Activated B cell treated with CpG ODN at 0.5 μM for 24 hours (primary cell): ENCODE measurements at regions of chr1 and their contacts with region 1.

Region 1: DNA sequence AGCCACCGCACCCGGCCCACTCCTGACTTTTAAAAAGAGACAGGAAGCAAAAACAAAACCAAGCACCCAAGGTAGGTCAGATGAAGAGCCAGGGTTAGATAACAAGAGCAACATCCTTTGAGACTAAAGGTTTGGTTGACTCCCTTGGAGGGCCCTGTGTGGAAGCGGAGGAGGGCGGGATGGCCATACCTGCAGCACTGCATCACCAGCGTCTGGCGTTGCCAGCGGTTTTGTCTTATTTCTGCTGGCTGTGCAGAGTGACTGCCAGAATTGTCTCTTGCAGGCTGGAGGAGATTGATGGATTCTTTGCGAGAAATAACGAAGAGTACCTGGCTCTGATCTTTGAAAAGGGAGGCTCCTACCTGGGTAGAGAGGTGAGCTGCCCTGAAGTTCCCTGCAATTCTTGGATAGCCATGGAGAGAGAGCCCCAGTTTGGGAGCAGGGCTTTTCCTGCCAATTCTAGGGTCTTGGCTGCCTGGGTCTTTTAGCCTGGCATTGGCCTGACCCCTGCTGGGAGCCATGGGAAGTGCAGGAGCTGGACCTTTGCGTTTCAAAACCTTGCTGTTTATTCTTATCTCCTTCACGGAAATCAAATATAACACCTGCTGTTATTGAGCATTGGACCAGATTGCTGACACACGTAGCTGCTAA is 24.0 kb downstream of the QSOX1 start:
- DNase-seq: peak; percentile 54
- ATAC-seq: peak; percentile 71
- H3K4me3 Mint-ChIP-seq: no peak overlapping the region
- H3K27ac Mint-ChIP-seq: no peak overlapping the region
- H3K4me1 Mint-ChIP-seq: no peaks in the 10 kb centered on the region
- H3K27me3 Mint-ChIP-seq: no peaks in the 10 kb centered on the region
- CTCF ChIP-seq: peak; percentile 84

Region 2: DNA sequence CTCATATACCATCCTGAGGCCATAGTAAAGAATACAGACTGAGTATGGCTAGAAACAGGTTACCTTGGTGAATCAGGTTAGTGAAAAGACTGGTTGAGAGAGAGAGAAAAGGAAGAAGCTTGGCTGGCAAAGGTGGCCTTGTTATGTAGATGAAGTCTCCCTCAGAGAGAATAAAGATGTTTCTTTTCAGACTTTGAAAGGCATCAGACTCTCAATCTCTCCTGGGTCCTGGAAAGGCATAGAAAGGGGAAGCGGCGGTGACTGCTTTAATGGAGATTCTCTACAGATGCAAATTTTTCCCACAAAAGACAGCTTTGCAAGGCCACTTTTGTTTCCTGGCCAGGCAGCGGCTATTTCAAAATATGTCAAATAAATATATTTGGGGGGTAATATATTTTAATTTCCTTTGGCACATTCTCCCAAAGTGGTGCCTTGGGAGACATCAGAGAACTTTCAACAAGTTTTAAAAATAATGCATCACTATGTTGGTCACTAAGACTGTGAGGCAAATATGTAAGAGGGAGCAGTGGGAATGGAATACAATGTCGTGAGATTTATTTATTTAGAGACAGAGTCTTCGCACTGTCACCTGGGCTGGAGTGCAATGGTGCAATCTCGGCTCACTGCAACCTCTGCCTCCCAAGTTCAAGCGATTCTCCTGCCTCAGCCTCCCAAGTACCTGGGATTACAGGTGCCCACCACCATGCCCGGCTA is 649.0 kb before region 1 on chr1:
- CTCF ChIA-PET with region 1: no interaction called
- POLR2A ChIA-PET with region 1: no interaction called
- intact Hi-C with region 1: no loop called
- DNase-seq: no peak
- ATAC-seq: no peak
- H3K4me3 Mint-ChIP-seq: no peak overlapping the region
- H3K27ac Mint-ChIP-seq: no peak overlapping the region
- H3K4me1 Mint-ChIP-seq: no peaks in the 10 kb centered on the region
- H3K27me3 Mint-ChIP-seq: peaks cover 10% of the 10 kb centered on the region
- CTCF ChIP-seq: no peak

Region 3: GRCh38 chr1:179706339-179706941 is 472.2 kb before region 1 on chr1:
- CTCF ChIA-PET with region 1: interaction called, 23 read pairs
- POLR2A ChIA-PET with region 1: no interaction called
- intact Hi-C with region 1: loop called (anchors 1 kb)
- DNase-seq: no peak
- ATAC-seq: no peak
- H3K4me3 Mint-ChIP-seq: no peak overlapping the region
- H3K27ac Mint-ChIP-seq: no peak overlapping the region
- H3K4me1 Mint-ChIP-seq: peaks cover 4% of the 10 kb centered on the region
- H3K27me3 Mint-ChIP-seq: peaks cover 7% of the 10 kb centered on the region
- CTCF ChIP-seq: no peak

Region 4: GRCh38 chr1:179809506-179810366 is 368.9 kb before region 1 on chr1:
- CTCF ChIA-PET with region 1: interaction called, 11 read pairs
- POLR2A ChIA-PET with region 1: no interaction called
- intact Hi-C with region 1: loop called (anchors 1 kb)
- DNase-seq: peak; percentile 47
- ATAC-seq: peak; percentile 78
- H3K4me3 Mint-ChIP-seq: no peak overlapping the region
- H3K27ac Mint-ChIP-seq: no peak overlapping the region
- H3K4me1 Mint-ChIP-seq: peaks cover 11% of the 10 kb centered on the region
- H3K27me3 Mint-ChIP-seq: peaks cover 23% of the 10 kb centered on the region
- CTCF ChIP-seq: no peak

Region 5: GRCh38 chr1:179867807-179868330 is 310.8 kb before region 1 on chr1:
- CTCF ChIA-PET with region 1: interaction called, 101 read pairs
- POLR2A ChIA-PET with region 1: no interaction called
- intact Hi-C with region 1: loop called (anchors 1 kb)
- DNase-seq: peak; percentile 34
- ATAC-seq: peak; percentile 71
- H3K4me3 Mint-ChIP-seq: no peak overlapping the region
- H3K27ac Mint-ChIP-seq: no peak overlapping the region
- H3K4me1 Mint-ChIP-seq: peaks cover 18% of the 10 kb centered on the region
- H3K27me3 Mint-ChIP-seq: no peaks in the 10 kb centered on the region
- CTCF ChIP-seq: peak; percentile 50

Region 6: GRCh38 chr1:180103819-180104218 is 74.8 kb before region 1 on chr1:
- CTCF ChIA-PET with region 1: interaction called, 6 read pairs
- POLR2A ChIA-PET with region 1: no interaction called
- intact Hi-C with region 1: loop called (anchors 2 kb)
- DNase-seq: no peak
- ATAC-seq: no peak
- H3K4me3 Mint-ChIP-seq: no peak overlapping the region
- H3K27ac Mint-ChIP-seq: no peak overlapping the region
- H3K4me1 Mint-ChIP-seq: no peaks in the 10 kb centered on the region
- H3K27me3 Mint-ChIP-seq: no peaks in the 10 kb centered on the region
- CTCF ChIP-seq: no peak

Region 7: GRCh38 chr1:180154325-180155181 is 24.1 kb before region 1 on chr1 and contains the start of gene QSOX1:
- CTCF ChIA-PET with region 1: no interaction called
- POLR2A ChIA-PET with region 1: interaction called, 4 read pairs
- intact Hi-C with region 1: loop called (anchors 1 kb)
- DNase-seq: peak; percentile 79
- ATAC-seq: peak; percentile 97
- H3K4me3 Mint-ChIP-seq: peak within 1 kb of the TSS; percentile 96
- H3K27ac Mint-ChIP-seq: peak within 1 kb of the TSS; percentile 83
- H3K4me1 Mint-ChIP-seq: peaks cover 23% of the 10 kb centered on the region
- H3K27me3 Mint-ChIP-seq: no peaks in the 10 kb centered on the region
- CTCF ChIP-seq: no peak
- total RNA-seq, gene QSOX1: 11.9 and 12.9 TPM in 2 replicates